Breast epithelium (tissue), 4 donors: ENCODE measurements at regions of chr10 and their contacts with region 1.

Region 1: GRCh38 chr10:72692057-72692910 is at the start of gene MCU:
- DNase-seq: peak; percentile 95
- H3K4me3 ChIP-seq: peak within 1 kb of the TSS; percentile 80 to 90 (median 86)
- H3K27ac ChIP-seq: peak within 1 kb of the TSS; percentile 93 to 96
- H3K4me1 ChIP-seq: no peaks in the 10 kb centered on the region
- H3K27me3 ChIP-seq: no peaks in the 10 kb centered on the region
- CTCF ChIP-seq: peak in 1 of 3 donors; percentile 12
- POLR2A ChIP-seq: no peak
- total RNA-seq, gene MCU: 11.7 to 27.4 (median 20.6) TPM

Region 2: DNA sequence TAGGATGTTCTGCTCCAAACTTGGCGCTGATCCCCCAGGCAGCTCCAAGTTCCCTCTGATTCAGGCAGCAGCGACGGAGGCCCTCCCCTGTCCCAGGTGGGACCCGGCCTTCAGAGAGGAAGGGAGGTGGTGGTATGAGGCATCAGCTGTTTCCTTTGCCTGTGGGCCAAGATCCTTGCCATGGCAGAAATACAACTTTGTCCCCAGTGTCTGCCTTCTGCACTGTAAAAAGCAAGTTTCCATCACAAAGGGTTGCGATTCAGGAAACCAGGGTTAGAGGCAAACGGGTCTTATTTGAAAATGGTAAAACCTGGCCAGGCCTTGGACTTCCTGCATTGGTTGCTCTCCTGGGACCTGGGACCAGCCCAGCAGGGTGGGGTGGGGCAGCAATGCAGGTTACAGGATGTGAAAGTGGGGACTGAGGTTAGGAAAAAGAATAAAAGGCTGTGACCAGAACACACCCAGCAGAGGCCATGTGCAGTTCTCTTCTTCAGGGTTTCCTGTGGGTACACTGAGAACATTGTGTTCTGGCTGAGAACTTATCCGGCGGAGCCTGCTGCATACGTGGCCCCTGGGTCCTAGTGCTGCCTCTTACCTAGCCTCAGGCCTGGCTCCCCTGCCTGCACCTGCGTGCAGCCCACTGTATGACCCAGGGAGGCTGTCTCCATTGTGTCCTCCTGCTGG is 443.7 kb before region 1 on chr10:
- intact Hi-C with region 1: loop called (anchors 5 kb)
- DNase-seq: peak; percentile 72 to 91
- H3K4me3 ChIP-seq: peak overlapping the region in 2 of 3 donors; percentile 25 to 50
- H3K27ac ChIP-seq: peak overlapping the region; percentile 89 to 93
- H3K4me1 ChIP-seq: peaks cover 14 to 67% of the 10 kb centered on the region in 2 donors
- H3K27me3 ChIP-seq: no peaks in the 10 kb centered on the region
- CTCF ChIP-seq: peak in 1 of 3 donors; percentile 15
- POLR2A ChIP-seq: no peak

Region 3: GRCh38 chr10:72709041-72709440 is 16.8 kb after region 1 on chr10:
- intact Hi-C with region 1: loop called (anchors 2 kb)
- DNase-seq: no peak
- H3K4me3 ChIP-seq: no peak overlapping the region
- H3K27ac ChIP-seq: no peak overlapping the region
- H3K4me1 ChIP-seq: no peaks in the 10 kb centered on the region
- H3K27me3 ChIP-seq: no peaks in the 10 kb centered on the region
- CTCF ChIP-seq: no peak
- POLR2A ChIP-seq: no peak